CD8-positive, alpha-beta T cell (primary cell): ENCODE measurements at regions of chr16 and their contacts with region 1.

Region 1: GRCh38 chr16:68590201-68590994 is 51.3 kb downstream of the ZFP90 start:
- DNase-seq: peak; percentile 6 to 66 (median 62)
- ATAC-seq: peak; percentile 83
- H3K4me3 ChIP-seq: no peak overlapping the region
- H3K4me3 Mint-ChIP-seq: no peak overlapping the region
- H3K27ac ChIP-seq: no peak overlapping the region
- H3K27ac Mint-ChIP-seq: no peak overlapping the region
- H3K4me1 ChIP-seq: no peaks in the 10 kb centered on the region
- H3K4me1 Mint-ChIP-seq: peaks cover 2% of the 10 kb centered on the region
- H3K27me3 ChIP-seq: no peaks in the 10 kb centered on the region
- H3K27me3 Mint-ChIP-seq: no peaks in the 10 kb centered on the region
- CTCF ChIP-seq: peak; percentile 52

Region 2: GRCh38 chr16:68538880-68539701 is 51.3 kb before region 1 on chr16 and contains the start of gene ZFP90:
- CTCF ChIA-PET with region 1: interaction called, 10 read pairs
- POLR2A ChIA-PET with region 1: no interaction called
- intact Hi-C with region 1: no loop called
- DNase-seq: peak; percentile 63 to 92 (median 83)
- ATAC-seq: peak; percentile 85
- H3K4me3 ChIP-seq: peak within 1 kb of the TSS; percentile 88 to 96
- H3K4me3 Mint-ChIP-seq: peak within 1 kb of the TSS; percentile 96
- H3K27ac ChIP-seq: peak within 1 kb of the TSS; percentile 92 to 94
- H3K27ac Mint-ChIP-seq: peak within 1 kb of the TSS; percentile 100
- H3K4me1 ChIP-seq: peaks cover 16% of the 10 kb centered on the region
- H3K4me1 Mint-ChIP-seq: peaks cover 25% of the 10 kb centered on the region
- H3K27me3 ChIP-seq: no peaks in the 10 kb centered on the region
- H3K27me3 Mint-ChIP-seq: no peaks in the 10 kb centered on the region
- CTCF ChIP-seq: no peak
- total RNA-seq, gene ZFP90: 17.0 to 23.5 TPM

Region 3: GRCh38 chr16:68575082-68575481 is 15.3 kb before region 1 on chr16:
- CTCF ChIA-PET with region 1: interaction called, 12 read pairs
- POLR2A ChIA-PET with region 1: no interaction called
- intact Hi-C with region 1: no loop called
- DNase-seq: no peak
- ATAC-seq: no peak
- H3K4me3 ChIP-seq: no peak overlapping the region
- H3K4me3 Mint-ChIP-seq: no peak overlapping the region
- H3K27ac ChIP-seq: no peak overlapping the region
- H3K27ac Mint-ChIP-seq: no peak overlapping the region
- H3K4me1 ChIP-seq: no peaks in the 10 kb centered on the region
- H3K4me1 Mint-ChIP-seq: no peaks in the 10 kb centered on the region
- H3K27me3 ChIP-seq: no peaks in the 10 kb centered on the region
- H3K27me3 Mint-ChIP-seq: no peaks in the 10 kb centered on the region
- CTCF ChIP-seq: no peak

Region 4: GRCh38 chr16:68732036-68732680 is 141.8 kb after region 1 on chr16:
- CTCF ChIA-PET with region 1: no interaction called
- POLR2A ChIA-PET with region 1: no interaction called
- intact Hi-C with region 1: no loop called
- DNase-seq: no peak
- ATAC-seq: no peak
- H3K4me3 ChIP-seq: no peak overlapping the region
- H3K4me3 Mint-ChIP-seq: no peak overlapping the region
- H3K27ac ChIP-seq: no peak overlapping the region
- H3K27ac Mint-ChIP-seq: no peak overlapping the region
- H3K4me1 ChIP-seq: no peaks in the 10 kb centered on the region
- H3K4me1 Mint-ChIP-seq: peaks cover 2% of the 10 kb centered on the region
- H3K27me3 ChIP-seq: peaks cover 4 to 8% of the 10 kb centered on the region in 2 experiments
- H3K27me3 Mint-ChIP-seq: peaks cover 20% of the 10 kb centered on the region
- CTCF ChIP-seq: no peak

Region 5: GRCh38 chr16:68800257-68800875 is 210.0 kb after region 1 on chr16:
- CTCF ChIA-PET with region 1: interaction called, 3 read pairs
- POLR2A ChIA-PET with region 1: no interaction called
- intact Hi-C with region 1: loop called in 1 of 2 experiments (anchors 2 kb)
- DNase-seq: peak in 7 of 9 experiments; percentile 6 to 61 (median 41)
- ATAC-seq: peak; percentile 62
- H3K4me3 ChIP-seq: no peak overlapping the region
- H3K4me3 Mint-ChIP-seq: no peak overlapping the region
- H3K27ac ChIP-seq: no peak overlapping the region
- H3K27ac Mint-ChIP-seq: no peak overlapping the region
- H3K4me1 ChIP-seq: no peaks in the 10 kb centered on the region
- H3K4me1 Mint-ChIP-seq: no peaks in the 10 kb centered on the region
- H3K27me3 ChIP-seq: no peaks in the 10 kb centered on the region
- H3K27me3 Mint-ChIP-seq: no peaks in the 10 kb centered on the region
- CTCF ChIP-seq: peak; percentile 29